Activated CD4-positive, alpha-beta T cell treated with anti-CD3 and anti-CD28 coated beads, Interleukin-2, amount 10 ng/mL, durations not matched to agents 24 days and 14 days (primary cell): ENCODE measurements at regions of chr4 and their contacts with region 1.

Region 1: GRCh38 chr4:8228319-8229250 is 29.5 kb downstream of the SH3TC1 start:
- DNase-seq: peak; percentile 85
- H3K4me3 Mint-ChIP-seq: peak overlapping the region; percentile 10
- H3K27ac Mint-ChIP-seq: peak overlapping the region; percentile 73
- H3K4me1 Mint-ChIP-seq: peaks cover 12% of the 10 kb centered on the region
- H3K27me3 Mint-ChIP-seq: no peaks in the 10 kb centered on the region

Region 2: DNA sequence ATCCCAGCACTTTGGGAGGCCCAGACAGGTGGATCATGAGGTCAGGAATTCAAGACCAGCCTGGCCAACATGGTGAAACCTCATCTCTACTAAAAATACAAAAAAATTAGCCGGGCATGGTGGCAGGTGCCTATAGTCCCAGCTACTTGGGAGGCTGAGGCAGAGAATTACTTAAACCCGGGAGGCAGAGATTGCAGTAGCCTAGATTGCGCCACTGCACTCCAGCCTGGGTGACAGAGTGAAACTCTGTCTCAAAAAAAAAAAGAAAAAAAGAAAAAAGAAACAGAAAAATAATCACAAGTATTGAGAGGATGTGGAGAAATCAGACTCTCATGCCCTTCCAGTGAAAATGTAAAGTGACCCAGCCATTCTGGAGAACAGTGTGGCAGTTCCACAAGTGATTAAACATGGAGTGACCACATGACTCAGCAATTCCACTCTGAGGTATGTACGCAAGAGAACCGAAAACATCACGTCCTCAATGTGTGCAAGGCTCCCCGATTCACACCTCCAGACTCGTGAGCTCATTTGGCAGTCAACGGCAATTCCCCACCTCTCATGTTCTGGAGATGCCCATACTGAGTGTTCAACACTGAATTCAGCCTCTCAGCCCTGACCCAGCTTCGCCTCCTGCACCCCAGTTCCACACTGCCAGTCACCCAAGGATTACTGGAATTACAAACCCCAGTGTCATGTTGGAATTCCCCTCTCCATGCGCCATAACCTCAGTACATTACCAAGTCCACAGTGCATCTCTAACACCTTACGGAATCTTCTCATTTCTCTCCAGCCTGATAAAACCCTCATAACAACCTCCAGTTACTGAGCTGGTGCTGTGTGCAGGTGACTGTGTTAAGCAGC is 190.8 kb after region 1 on chr4:
- intact Hi-C with region 1: loop called (anchors 1 kb)
- DNase-seq: peak; percentile 72
- H3K4me3 Mint-ChIP-seq: peak overlapping the region; percentile 32
- H3K27ac Mint-ChIP-seq: peak overlapping the region; percentile 89
- H3K4me1 Mint-ChIP-seq: peaks cover 16% of the 10 kb centered on the region
- H3K27me3 Mint-ChIP-seq: no peaks in the 10 kb centered on the region